ENCODE measurements at regions of chr5 and their contacts with region 1.

Region 1: GRCh38 chr5:96601811-96602244 is 60.3 kb upstream of the CAST start:
- DNase-seq: peak in 1 of 2 donors; percentile 22
- ATAC-seq: peak; percentile 87 to 90
- H3K4me3 ChIP-seq: no peak overlapping the region
- H3K27ac ChIP-seq: no peak overlapping the region
- H3K4me1 ChIP-seq: no peaks in the 10 kb centered on the region
- H3K27me3 ChIP-seq: no peaks in the 10 kb centered on the region
- CTCF ChIP-seq: peak; percentile 63 to 86 (median 75)
- POLR2A ChIP-seq: no peak

Region 2: DNA sequence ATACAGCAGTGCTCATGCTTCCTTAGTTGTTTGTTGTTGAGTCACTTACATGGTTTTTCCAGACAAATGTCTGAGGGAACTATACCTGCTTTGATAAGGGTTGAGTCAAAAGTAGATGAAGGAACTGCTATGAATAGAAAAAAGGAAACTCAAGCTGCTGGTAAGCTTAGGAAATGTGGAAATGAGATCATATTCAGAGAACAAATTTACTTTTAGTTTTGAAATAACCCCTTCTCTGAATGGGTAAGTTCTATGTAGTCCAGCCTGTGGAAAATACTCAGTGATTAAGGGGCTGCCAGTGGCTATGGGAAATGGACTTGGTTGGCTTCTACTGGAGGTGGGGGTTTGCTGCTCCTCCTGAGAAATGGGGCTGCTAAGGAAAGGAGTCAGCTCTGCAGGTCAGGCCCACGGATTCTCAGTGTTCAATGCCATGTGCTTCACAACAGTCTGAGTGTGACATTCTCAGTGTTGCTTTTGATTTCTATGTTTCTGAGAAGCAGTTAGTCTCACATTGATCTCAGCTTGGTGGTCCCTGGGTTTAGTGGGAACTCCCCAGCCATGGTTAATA is 731.6 kb before region 1 on chr5:
- in situ Hi-C with region 1: loop called in 3 of 4 experiments (anchors 10 to 25 kb)
- intact Hi-C with region 1: no loop called
- DNase-seq: no peak
- ATAC-seq: peak; percentile 57 to 67
- H3K4me3 ChIP-seq: no peak overlapping the region
- H3K27ac ChIP-seq: peak overlapping the region; percentile 46 to 77 (median 72)
- H3K4me1 ChIP-seq: peaks cover 17 to 18% of the 10 kb centered on the region in 2 donors
- H3K27me3 ChIP-seq: no peaks in the 10 kb centered on the region
- CTCF ChIP-seq: no peak
- POLR2A ChIP-seq: peak in 1 of 2 donors; percentile 27

Region 3: DNA sequence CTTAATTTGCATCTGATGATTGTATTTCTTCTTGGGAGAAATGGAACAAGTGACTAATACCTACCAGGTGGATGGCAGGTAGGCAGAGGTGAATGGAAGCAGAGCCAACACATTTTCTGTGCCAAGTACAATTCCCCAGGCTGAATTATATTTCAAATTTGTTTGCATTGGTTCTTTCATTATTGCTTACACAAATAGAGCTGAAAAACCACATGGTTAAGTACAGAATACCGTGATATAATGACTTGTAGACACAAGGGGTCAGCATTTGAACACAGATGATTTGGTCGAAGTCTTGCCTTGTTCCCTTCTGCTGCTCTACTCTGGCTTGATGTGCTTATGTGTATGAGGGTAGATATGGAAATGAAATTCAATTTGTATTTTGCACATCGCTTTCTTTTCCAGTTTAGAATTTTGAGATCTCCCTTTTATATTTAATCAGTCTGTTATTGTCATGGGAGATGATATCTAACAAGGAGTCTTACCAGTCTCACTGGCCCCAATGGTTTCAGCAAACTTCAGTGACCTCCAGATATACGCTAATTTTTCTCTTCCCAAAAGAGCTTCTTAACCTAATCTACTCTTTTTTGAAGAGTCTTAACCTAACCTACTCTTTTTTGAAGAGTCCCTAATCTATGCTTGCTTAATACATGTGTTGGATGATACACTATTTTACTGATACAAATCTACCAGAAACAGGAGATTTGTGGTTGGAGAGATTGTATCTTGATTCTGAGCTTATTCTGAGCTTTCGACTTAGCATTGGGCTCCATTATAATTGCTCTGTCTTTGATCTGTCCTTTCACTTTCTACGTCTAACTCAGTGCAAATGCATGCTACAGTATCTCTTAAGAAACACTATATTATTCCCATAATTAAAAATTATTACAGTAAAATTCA is 256.9 kb before region 1 on chr5:
- in situ Hi-C with region 1: loop called (anchors 5 kb)
- intact Hi-C with region 1: loop called (anchors 1 kb)
- DNase-seq: no peak
- ATAC-seq: peak; percentile 93 to 97
- H3K4me3 ChIP-seq: no peak overlapping the region
- H3K27ac ChIP-seq: no peak overlapping the region
- H3K4me1 ChIP-seq: peaks cover under 1 to 7% of the 10 kb centered on the region in 2 donors
- H3K27me3 ChIP-seq: no peaks in the 10 kb centered on the region
- CTCF ChIP-seq: peak; percentile 35 to 63 (median 59)
- POLR2A ChIP-seq: no peak